ENCODE measurements at regions of chr1 and their contacts with region 1.

Region 1: DNA sequence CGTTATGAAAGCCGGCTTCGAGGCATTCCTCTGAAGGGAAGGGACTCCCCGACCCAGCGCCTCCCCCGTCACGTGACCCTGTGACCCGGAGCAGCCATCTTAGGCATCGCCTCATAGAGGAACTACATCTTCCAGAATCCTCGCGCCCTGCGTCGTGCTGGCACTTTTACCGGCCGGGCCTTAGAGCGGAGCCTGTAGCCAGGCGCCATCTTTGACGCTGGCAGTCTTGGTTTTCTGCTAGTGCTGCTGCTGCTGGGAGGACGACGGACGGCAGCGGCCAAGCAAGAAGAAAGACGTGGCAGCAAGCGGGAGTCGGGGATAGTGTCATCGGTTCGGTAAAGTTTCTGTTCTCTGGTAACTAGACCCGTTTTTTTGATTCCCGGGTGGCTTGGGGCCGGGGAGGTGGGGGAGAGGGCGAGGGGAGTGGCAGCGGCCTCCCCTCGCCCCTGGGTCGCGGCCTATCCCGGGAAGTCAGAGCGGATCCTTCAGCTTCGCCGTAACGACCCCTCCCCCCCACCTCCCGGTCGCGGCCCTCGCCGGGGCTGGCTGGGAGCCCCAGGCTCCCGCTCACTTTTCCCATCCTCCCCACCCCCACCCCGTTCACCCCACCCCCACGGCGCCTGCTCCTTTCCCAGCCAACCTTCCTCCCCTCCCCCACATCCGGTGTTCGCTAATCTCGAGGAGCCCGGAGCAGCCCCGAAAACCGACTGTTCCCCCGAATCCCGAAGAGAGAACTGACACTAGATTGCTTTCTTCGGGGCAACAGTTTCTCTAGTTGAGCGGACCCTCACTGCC is at the starts of genes ZBED6 and ZC3H11A:
- DNase-seq: peak; percentile 96 to 100 (median 98)
- ATAC-seq: peak; percentile 98
- H3K4me3 ChIP-seq: peak within 1 kb of the TSS; percentile 83
- H3K4me3 Mint-ChIP-seq: peak within 1 kb of the TSS; percentile 98
- H3K27ac ChIP-seq: peak within 1 kb of the TSS; percentile 83 to 87
- H3K27ac Mint-ChIP-seq: peak within 1 kb of the TSS; percentile 86
- H3K4me1 ChIP-seq: peaks cover 32% of the 10 kb centered on the region
- H3K4me1 Mint-ChIP-seq: peaks cover 56% of the 10 kb centered on the region
- H3K27me3 ChIP-seq: no peaks in the 10 kb centered on the region
- H3K27me3 Mint-ChIP-seq: no peaks in the 10 kb centered on the region
- CTCF ChIP-seq: no peak
- total RNA-seq, gene ZBED6: 25.0 to 25.2 TPM
- total RNA-seq, gene ZC3H11A: 67.6 to 73.3 TPM

Region 2: DNA sequence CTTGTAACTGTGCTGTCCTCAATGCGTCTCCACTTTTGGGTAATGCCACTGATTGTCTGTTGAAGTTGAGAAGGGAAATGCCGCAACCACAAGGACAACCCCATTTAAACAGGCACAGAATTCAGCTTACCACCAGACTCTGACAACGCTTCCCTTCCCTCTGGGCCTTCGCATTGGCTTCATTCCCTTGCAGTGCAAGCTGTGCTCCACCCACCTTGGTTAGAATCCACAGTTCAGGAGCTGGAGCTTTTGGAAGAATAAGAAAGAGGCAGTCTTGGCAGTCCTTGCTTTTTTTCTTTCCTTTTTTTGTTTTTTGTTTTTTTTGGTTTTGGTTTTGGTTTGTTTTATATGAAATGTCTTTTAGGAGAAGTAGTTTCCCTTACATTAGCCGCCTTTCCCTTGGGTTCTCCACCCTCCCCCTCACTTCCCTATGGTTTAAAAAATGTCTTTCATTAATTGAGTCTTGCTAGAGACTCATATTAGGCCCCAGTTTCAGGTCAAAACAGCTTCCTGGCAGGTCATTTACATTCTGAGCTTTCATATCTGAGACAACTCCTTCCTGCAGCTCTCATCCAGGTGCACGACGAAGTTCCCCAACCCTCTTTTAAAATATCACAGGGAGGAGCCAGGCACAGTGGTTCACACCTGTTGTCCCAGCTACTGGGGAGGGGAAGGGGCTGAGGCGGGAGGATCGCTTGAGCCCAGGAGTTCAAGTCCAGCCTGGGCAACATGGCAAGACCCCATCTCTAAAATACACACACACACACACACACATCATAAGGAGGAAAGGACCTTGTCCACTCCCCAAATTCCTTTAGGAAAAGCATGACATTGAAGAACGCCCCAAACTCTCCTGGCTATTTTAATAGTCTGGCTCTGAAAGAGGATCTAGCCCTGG is 51.3 kb before region 1 on chr1:
- CTCF ChIA-PET with region 1: no interaction called
- POLR2A ChIA-PET with region 1: no interaction called
- intact Hi-C with region 1: loop called in 1 of 2 experiments (anchors 10 kb)
- DNase-seq: peak in 8 of 14 experiments; percentile 8 to 84 (median 40)
- ATAC-seq: peak; percentile 96
- H3K4me3 ChIP-seq: peak overlapping the region; percentile 21
- H3K4me3 Mint-ChIP-seq: peak overlapping the region; percentile 74
- H3K27ac ChIP-seq: peak overlapping the region; percentile 57 to 68
- H3K27ac Mint-ChIP-seq: peak overlapping the region; percentile 87
- H3K4me1 ChIP-seq: peaks cover 11% of the 10 kb centered on the region
- H3K4me1 Mint-ChIP-seq: peaks cover 25% of the 10 kb centered on the region
- H3K27me3 ChIP-seq: no peaks in the 10 kb centered on the region
- H3K27me3 Mint-ChIP-seq: no peaks in the 10 kb centered on the region
- CTCF ChIP-seq: no peak

Region 3: GRCh38 chr1:203751051-203751450 is 44.6 kb before region 1 on chr1:
- CTCF ChIA-PET with region 1: no interaction called
- POLR2A ChIA-PET with region 1: no interaction called
- intact Hi-C with region 1: loop called (anchors 5 to 10 kb)
- DNase-seq: no peak
- ATAC-seq: no peak
- H3K4me3 ChIP-seq: no peak overlapping the region
- H3K4me3 Mint-ChIP-seq: no peak overlapping the region
- H3K27ac ChIP-seq: no peak overlapping the region
- H3K27ac Mint-ChIP-seq: no peak overlapping the region
- H3K4me1 ChIP-seq: peaks cover 25% of the 10 kb centered on the region
- H3K4me1 Mint-ChIP-seq: peaks cover 17% of the 10 kb centered on the region
- H3K27me3 ChIP-seq: no peaks in the 10 kb centered on the region
- H3K27me3 Mint-ChIP-seq: no peaks in the 10 kb centered on the region
- CTCF ChIP-seq: no peak

Region 4: DNA sequence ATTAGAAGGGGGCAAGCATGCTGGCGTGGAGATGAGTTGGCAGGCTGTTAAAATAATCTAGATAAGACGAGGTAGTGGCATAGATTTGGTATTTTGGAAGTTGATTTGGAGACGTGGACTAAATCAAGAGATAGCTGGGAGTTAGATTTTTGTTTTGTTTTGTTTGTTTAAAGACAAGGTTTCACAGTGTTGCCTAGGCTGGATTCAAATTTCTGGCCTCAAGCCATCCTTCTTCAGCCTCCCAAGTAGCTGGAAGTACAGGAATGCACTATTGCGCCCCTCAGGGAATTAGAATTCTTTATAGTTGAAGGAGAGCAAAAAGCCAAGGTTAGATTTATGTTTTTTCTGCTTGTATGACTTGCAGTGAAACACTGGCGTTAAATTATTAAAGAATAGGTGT is 43.4 kb after region 1 on chr1:
- CTCF ChIA-PET with region 1: no interaction called
- POLR2A ChIA-PET with region 1: no interaction called
- intact Hi-C with region 1: no loop called
- DNase-seq: no peak
- ATAC-seq: no peak
- H3K4me3 ChIP-seq: no peak overlapping the region
- H3K4me3 Mint-ChIP-seq: no peak overlapping the region
- H3K27ac ChIP-seq: no peak overlapping the region
- H3K27ac Mint-ChIP-seq: peak overlapping the region; percentile 44
- H3K4me1 ChIP-seq: no peaks in the 10 kb centered on the region
- H3K4me1 Mint-ChIP-seq: no peaks in the 10 kb centered on the region
- H3K27me3 ChIP-seq: no peaks in the 10 kb centered on the region
- H3K27me3 Mint-ChIP-seq: no peaks in the 10 kb centered on the region
- CTCF ChIP-seq: no peak

Measured in CD4-positive, alpha-beta T cell (primary cell).